GM12878 (cell line): ENCODE measurements at regions of chr12 and their contacts with region 1.

Region 1: GRCh38 chr12:108712165-108712924 is 19.0 kb downstream of the CORO1C start:
- DNase-seq: no peak
- ATAC-seq: peak; percentile 80
- H3K4me3 ChIP-seq: no peak overlapping the region
- H3K27ac ChIP-seq: peak overlapping the region; percentile 20; the same call in 1 of the 2 replicates
- H3K4me1 ChIP-seq: peaks cover 36% of the 10 kb centered on the region
- H3K27me3 ChIP-seq: no peaks in the 10 kb centered on the region
- CTCF ChIP-seq: no peak
- EP300 ChIP-seq: no peak
- POLR2A ChIP-seq: no peak
- RAD21 ChIP-seq: no peak

Region 2: DNA sequence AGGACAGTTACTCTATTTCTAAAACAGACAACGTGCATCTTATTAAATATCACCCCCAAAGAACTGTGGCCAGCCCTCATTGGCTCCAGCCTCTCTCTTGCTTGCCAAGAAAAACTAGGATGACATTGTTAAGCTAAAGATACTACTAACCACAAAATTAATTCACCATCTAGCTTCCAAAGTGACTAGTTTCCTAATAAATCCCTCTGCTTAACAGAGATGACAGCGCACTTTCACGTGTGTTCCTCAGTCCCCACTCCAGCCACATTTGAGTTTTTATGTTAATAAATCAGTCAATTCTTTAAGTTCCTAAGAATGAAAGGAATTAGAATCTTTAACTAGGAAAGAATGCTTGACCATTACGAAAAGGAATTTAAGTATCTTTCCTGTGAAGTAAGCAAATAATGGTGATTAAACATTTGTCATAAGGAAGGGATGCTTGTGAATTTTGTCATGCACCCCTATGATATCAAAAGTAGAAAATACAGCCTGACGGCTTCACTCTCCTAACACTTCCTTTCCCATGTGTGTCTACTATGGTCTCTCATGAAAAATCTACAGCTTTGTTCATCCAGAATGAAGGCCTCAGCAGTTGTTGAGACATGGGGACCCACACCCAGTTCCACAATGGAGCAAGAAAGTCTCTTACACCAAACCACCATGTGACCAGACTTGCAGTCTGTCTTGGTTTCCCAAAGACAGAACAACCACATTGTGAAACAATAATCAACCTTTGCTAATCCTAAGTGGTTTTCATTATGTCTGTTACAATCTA is 10.8 kb after region 1 on chr12:
- CTCF ChIA-PET with region 1: interaction called, 5 read pairs
- POLR2A ChIA-PET with region 1: interaction called, 14 read pairs
- RAD21 ChIA-PET with region 1: interaction called, 3 read pairs
- SMC1A ChIA-PET with region 1: interaction called, 29 read pairs
- in situ Hi-C with region 1: no loop called
- intact Hi-C with region 1: no loop called
- DNase-seq: no peak
- ATAC-seq: peak; percentile 52
- H3K4me3 ChIP-seq: no peak overlapping the region
- H3K27ac ChIP-seq: no peak overlapping the region
- H3K4me1 ChIP-seq: peaks cover 11% of the 10 kb centered on the region
- H3K27me3 ChIP-seq: no peaks in the 10 kb centered on the region
- CTCF ChIP-seq: no peak
- EP300 ChIP-seq: no peak
- POLR2A ChIP-seq: no peak
- RAD21 ChIP-seq: no peak